HepG2 (cell line): ENCODE measurements at regions of chr7 and their contacts with region 1.

Region 1: GRCh38 chr7:104923010-104923421 is 91.0 kb upstream of the KMT2E start:
- DNase-seq: peak; percentile 84
- ATAC-seq: peak; percentile 95
- H3K4me3 ChIP-seq: no peak overlapping the region
- H3K27ac ChIP-seq: no peak overlapping the region
- H3K4me1 ChIP-seq: peaks cover 31% of the 10 kb centered on the region
- H3K27me3 ChIP-seq: 0 out of 5 replicates have a peak, but pooled peaks cover 0 to 3% of the 10 kb centered on the region in 2 experiments
- CTCF ChIP-seq: peak; percentile 90
- EP300 ChIP-seq: no peak
- POLR2A ChIP-seq: no peak
- RAD21 ChIP-seq: peak; percentile 89

Region 2: DNA sequence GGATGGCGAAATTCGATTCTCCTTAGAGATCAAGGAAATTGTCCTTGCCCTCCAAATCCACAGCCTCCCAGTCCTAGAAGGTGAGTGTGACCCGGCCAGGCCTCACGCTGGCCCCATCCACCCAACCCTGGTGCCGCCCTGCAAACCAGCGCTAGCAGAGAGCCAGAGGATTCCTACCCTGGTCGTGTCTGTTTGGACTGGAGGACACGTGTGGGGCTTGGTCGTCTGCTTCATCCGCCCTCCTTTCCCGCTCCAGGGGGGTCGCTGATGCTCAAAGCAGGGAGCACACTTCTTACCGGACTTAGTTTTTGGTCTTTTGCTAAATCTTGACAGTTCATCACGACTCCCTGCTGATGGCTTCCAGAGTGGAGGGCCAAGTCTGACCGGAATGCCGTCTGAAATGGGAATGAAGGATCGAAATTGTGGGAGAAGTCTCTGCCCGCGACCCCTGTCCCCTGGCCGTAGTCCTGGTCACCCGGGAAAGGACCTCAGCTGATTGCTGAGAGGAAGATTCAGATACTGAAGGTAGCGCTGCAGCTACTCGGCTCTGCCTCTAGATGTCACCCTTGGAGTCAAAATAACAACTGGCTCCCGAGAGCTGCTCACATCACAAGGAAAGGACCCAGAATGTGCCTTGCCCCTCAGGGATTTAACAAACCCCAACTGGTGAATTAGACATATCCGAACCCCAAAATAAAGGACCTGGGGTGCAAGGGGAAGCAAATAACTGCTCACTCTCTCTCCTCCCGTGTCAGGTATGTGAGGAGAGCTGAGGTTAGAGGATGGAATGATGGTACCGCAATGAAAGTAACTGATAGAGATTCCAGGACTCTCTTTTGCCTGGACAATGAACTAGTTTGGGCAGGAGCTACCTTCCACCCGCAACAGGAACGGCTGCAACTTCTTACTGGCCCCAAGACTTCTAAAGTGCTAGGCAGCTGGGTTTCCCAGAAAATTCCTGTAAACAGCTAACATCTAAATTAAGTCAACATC is 691.7 kb before region 1 on chr7:
- CTCF ChIA-PET with region 1: no interaction called
- POLR2A ChIA-PET with region 1: no interaction called
- in situ Hi-C with region 1: no loop called
- intact Hi-C with region 1: loop called (anchors 5 kb)
- DNase-seq: peak; percentile 47
- ATAC-seq: peak; percentile 98
- H3K4me3 ChIP-seq: no peak overlapping the region
- H3K27ac ChIP-seq: no peak overlapping the region
- H3K4me1 ChIP-seq: no peaks in the 10 kb centered on the region
- H3K27me3 ChIP-seq: no peaks in the 10 kb centered on the region
- CTCF ChIP-seq: peak; percentile 89
- EP300 ChIP-seq: no peak
- POLR2A ChIP-seq: no peak
- RAD21 ChIP-seq: peak; percentile 61

Region 3: GRCh38 chr7:104883718-104884452 is 39.1 kb before region 1 on chr7:
- CTCF ChIA-PET with region 1: interaction called, 32 read pairs
- POLR2A ChIA-PET with region 1: interaction called, 5 read pairs
- in situ Hi-C with region 1: loop called (anchors 5 kb)
- intact Hi-C with region 1: loop called (anchors 1 kb)
- DNase-seq: peak; percentile 76
- ATAC-seq: peak; percentile 98
- H3K4me3 ChIP-seq: peak overlapping the region in 1 of 3 experiments; percentile 39; a peak in 2 of 6 replicates
- H3K27ac ChIP-seq: no peak overlapping the region
- H3K4me1 ChIP-seq: peaks cover 10% of the 10 kb centered on the region
- H3K27me3 ChIP-seq: 0 out of 5 replicates have a peak, but pooled peaks cover 0 to 3% of the 10 kb centered on the region in 2 experiments
- CTCF ChIP-seq: peak; percentile 92
- EP300 ChIP-seq: no peak
- POLR2A ChIP-seq: no peak
- RAD21 ChIP-seq: peak; percentile 79

Region 4: GRCh38 chr7:105046414-105046813 is 123.4 kb after region 1 on chr7:
- CTCF ChIA-PET with region 1: no interaction called
- POLR2A ChIA-PET with region 1: no interaction called
- in situ Hi-C with region 1: no loop called
- intact Hi-C with region 1: loop called (anchors 1 kb)
- DNase-seq: no peak
- ATAC-seq: no peak
- H3K4me3 ChIP-seq: no peak overlapping the region
- H3K27ac ChIP-seq: no peak overlapping the region
- H3K4me1 ChIP-seq: no peaks in the 10 kb centered on the region
- H3K27me3 ChIP-seq: no peaks in the 10 kb centered on the region
- CTCF ChIP-seq: no peak
- EP300 ChIP-seq: no peak
- POLR2A ChIP-seq: no peak
- RAD21 ChIP-seq: no peak

Region 5: GRCh38 chr7:105589356-105590077 is 666.5 kb after region 1 on chr7:
- CTCF ChIA-PET with region 1: no interaction called
- POLR2A ChIA-PET with region 1: no interaction called
- in situ Hi-C with region 1: no loop called
- intact Hi-C with region 1: loop called (anchors 1 kb)
- DNase-seq: peak; percentile 66
- ATAC-seq: peak; percentile 94
- H3K4me3 ChIP-seq: no peak overlapping the region
- H3K27ac ChIP-seq: no peak overlapping the region
- H3K4me1 ChIP-seq: peaks cover 9% of the 10 kb centered on the region
- H3K27me3 ChIP-seq: no peaks in the 10 kb centered on the region; a peak in 1 of 5 replicates
- CTCF ChIP-seq: peak; percentile 84
- EP300 ChIP-seq: no peak
- POLR2A ChIP-seq: no peak
- RAD21 ChIP-seq: peak; percentile 66